WTC11 (cell line): ENCODE measurements at regions of chr19 and their contacts with region 1.

Region 1: DNA sequence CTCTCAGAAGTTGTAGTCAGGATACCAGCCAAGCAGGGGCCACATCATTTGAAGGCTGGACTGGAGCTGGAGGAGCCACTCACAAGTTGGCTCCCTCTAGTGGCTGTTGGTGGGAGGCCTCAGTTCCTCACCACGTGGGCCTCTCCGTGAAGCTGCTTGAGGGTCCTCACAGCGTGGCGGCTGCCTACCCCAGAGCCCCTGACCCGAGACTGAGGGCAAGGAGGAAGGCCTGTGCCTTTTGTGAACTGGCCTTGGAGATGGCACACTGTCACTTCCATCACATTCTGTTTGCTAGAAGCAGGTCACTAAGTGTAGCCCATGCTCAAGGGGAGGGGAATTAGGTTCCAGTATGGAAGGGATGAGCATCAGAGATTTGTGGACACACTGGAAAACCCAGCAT is 14.6 kb downstream of the GNA11 start:
- DNase-seq: peak; percentile 84
- ATAC-seq: peak; percentile 61
- H3K4me3 Mint-ChIP-seq: no peak overlapping the region
- H3K27ac Mint-ChIP-seq: peak overlapping the region; percentile 86
- H3K4me1 Mint-ChIP-seq: peaks cover 24% of the 10 kb centered on the region
- H3K27me3 Mint-ChIP-seq: no peaks in the 10 kb centered on the region
- CTCF ChIP-seq: peak; percentile 72

Region 2: GRCh38 chr19:3006075-3006767 is 102.6 kb before region 1 on chr19:
- CTCF ChIA-PET with region 1: interaction called, 12 read pairs
- POLR2A ChIA-PET with region 1: no interaction called
- DNase-seq: peak; percentile 96
- ATAC-seq: peak; percentile 95
- H3K4me3 Mint-ChIP-seq: no peak overlapping the region
- H3K27ac Mint-ChIP-seq: no peak overlapping the region
- H3K4me1 Mint-ChIP-seq: no peaks in the 10 kb centered on the region
- H3K27me3 Mint-ChIP-seq: no peaks in the 10 kb centered on the region
- CTCF ChIP-seq: no peak

Region 3: GRCh38 chr19:3041761-3042620 is 66.8 kb before region 1 on chr19:
- CTCF ChIA-PET with region 1: interaction called, 36 read pairs
- POLR2A ChIA-PET with region 1: no interaction called
- DNase-seq: no peak
- ATAC-seq: no peak; the same call in 1 of the 2 replicates
- H3K4me3 Mint-ChIP-seq: peak overlapping the region; percentile 60
- H3K27ac Mint-ChIP-seq: no peak overlapping the region
- H3K4me1 Mint-ChIP-seq: peaks cover 34% of the 10 kb centered on the region
- H3K27me3 Mint-ChIP-seq: peaks cover 49% of the 10 kb centered on the region
- CTCF ChIP-seq: no peak

Region 4: GRCh38 chr19:3094601-3095437 is 14.0 kb before region 1 on chr19:
- CTCF ChIA-PET with region 1: interaction called, 73 read pairs
- POLR2A ChIA-PET with region 1: interaction called, 4 read pairs
- DNase-seq: no peak
- ATAC-seq: no peak
- H3K4me3 Mint-ChIP-seq: peak overlapping the region; percentile 78
- H3K27ac Mint-ChIP-seq: no peak overlapping the region
- H3K4me1 Mint-ChIP-seq: peaks cover 14% of the 10 kb centered on the region
- H3K27me3 Mint-ChIP-seq: no peaks in the 10 kb centered on the region
- CTCF ChIP-seq: no peak

Region 5: DNA sequence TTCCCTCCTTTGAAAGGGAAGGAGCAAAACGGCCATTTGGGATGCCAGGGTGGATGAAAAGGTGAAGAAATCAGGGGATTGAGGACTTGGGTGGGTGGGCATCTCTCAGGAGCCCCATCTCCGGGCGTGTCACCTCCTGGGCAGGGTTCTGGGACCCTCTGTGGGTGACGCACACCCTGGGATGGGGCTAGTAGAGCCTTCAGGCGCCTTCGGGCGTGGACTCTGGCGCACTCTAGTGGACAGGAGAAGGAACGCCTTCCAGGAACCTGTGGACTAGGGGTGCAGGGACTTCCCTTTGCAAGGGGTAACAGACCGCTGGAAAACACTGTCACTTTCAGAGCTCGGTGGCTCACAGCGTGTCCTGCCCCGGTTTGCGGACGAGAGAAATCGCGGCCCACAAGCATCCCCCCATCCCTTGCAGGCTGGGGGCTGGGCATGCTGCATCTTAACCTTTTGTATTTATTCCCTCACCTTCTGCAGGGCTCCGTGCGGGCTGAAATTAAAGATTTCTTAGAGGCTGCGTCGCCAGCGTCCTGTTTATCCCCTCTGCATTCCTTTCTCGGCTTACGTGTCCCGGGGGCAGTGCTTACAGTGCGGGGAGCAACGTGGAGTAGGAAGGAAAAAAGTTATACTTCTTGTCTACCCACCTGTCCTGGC is 54.6 kb after region 1 on chr19:
- CTCF ChIA-PET with region 1: interaction called, 14 read pairs
- POLR2A ChIA-PET with region 1: no interaction called
- DNase-seq: peak; percentile 83
- ATAC-seq: peak; percentile 98
- H3K4me3 Mint-ChIP-seq: peak overlapping the region; percentile 67
- H3K27ac Mint-ChIP-seq: no peak overlapping the region
- H3K4me1 Mint-ChIP-seq: peaks cover 7% of the 10 kb centered on the region
- H3K27me3 Mint-ChIP-seq: peaks cover 14% of the 10 kb centered on the region
- CTCF ChIP-seq: peak; percentile 83